Cardiac septum (tissue), 1 donor: ENCODE measurements at regions of chr17 and their contacts with region 1.

Region 1: DNA sequence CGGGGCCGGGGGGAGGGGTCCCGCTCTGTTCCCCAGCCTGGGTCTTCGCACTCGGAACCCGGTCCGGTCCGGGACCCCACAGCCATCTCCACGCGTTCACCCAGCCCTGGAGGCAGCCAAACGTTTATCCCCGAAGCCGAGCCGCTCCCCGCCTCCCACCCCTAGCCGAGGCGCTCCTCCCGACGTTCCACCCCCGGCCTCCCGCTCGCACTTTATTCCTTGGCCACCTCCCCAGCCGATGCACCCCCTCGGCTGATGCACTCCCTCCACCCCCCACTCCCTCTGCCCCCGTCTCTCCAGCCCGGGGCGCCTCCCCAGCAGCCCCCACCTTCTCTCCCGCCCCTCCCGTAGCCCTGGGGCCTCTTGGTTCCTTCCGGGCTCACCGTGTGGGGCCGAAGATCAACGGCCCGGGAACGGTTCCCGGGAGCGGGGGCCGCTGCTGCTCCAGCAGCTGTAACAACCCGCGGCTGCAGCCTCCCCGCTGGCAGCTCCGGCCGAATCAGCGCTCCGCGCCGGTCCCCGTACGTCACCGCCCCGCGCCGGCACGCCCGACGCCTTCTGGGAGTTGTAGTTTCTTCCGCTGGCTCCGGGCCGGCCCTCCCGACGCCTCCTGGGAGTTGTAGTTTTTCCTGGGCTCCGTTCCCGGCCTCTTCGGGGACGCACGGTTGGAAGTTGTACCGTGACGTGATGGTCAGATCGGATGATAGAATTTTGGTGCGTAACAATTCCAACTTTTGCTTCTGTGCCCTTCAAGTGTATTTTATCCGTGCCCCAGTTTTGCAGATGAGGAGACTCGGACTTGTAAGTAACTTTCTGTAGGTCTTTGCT is at the starts of genes LRRC3C and ORMDL3:
- DNase-seq: peak; percentile 98
- total RNA-seq, gene LRRC3C: not detected
- total RNA-seq, gene ORMDL3: 104 TPM

Region 2: DNA sequence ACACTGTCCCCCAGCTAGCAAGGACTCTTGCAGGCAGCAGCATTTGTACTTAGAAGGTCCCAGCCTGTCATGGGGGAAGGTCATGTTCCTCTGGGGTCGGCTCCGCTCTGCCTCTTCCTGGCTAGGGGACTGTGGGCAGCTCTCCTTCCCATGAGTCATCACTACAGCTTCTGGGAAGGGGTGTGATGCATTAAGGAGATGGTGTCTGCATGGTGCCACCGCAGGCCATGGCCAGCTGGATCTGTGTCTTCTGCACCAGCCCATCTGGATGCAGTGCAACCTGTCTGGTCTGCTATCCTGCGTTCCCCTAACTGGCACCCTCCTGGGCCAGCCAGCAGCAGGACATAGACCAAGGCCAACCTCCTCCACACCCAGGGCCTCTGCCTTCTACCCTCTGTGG is 284.0 kb before region 1 on chr17:
- intact Hi-C with region 1: loop called (anchors 5 kb)
- DNase-seq: no peak

Region 3: GRCh38 chr17:39952680-39953470 is 25.6 kb after region 1 on chr17:
- intact Hi-C with region 1: loop called (anchors 2 kb)
- DNase-seq: peak; percentile 100